ENCODE measurements at regions of chr14 and their contacts with region 1.

Region 1: DNA sequence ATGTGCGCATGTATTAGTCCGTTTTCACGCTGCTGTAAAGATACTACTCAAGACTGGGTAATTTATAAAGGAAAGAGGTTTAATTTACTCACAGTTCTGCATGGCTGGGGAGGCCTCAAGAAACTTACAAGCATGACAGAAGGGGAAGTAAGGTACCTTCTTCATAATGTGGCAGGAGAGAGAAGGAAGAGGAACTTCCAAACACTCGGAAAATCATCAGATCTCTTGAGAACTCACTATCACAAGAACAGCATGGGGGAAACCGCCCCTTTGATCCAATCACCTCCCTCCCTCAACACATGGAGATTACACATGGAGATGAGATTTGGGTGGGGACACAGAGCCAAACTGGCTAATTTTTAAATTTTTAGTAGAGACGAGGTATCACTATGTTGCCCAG is 41.8 kb upstream of the SNX6 start:
- DNase-seq: no peak
- ATAC-seq: no peak
- H3K4me3 ChIP-seq: no peak overlapping the region
- H3K27ac ChIP-seq: no peak overlapping the region
- H3K4me1 ChIP-seq: peaks cover 14% of the 10 kb centered on the region
- H3K27me3 ChIP-seq: peaks cover 0 to 4% of the 10 kb centered on the region in 2 experiments; a peak in 1 of 5 replicates
- CTCF ChIP-seq: no peak
- EP300 ChIP-seq: no peak
- POLR2A ChIP-seq: no peak
- RAD21 ChIP-seq: no peak

Region 2: DNA sequence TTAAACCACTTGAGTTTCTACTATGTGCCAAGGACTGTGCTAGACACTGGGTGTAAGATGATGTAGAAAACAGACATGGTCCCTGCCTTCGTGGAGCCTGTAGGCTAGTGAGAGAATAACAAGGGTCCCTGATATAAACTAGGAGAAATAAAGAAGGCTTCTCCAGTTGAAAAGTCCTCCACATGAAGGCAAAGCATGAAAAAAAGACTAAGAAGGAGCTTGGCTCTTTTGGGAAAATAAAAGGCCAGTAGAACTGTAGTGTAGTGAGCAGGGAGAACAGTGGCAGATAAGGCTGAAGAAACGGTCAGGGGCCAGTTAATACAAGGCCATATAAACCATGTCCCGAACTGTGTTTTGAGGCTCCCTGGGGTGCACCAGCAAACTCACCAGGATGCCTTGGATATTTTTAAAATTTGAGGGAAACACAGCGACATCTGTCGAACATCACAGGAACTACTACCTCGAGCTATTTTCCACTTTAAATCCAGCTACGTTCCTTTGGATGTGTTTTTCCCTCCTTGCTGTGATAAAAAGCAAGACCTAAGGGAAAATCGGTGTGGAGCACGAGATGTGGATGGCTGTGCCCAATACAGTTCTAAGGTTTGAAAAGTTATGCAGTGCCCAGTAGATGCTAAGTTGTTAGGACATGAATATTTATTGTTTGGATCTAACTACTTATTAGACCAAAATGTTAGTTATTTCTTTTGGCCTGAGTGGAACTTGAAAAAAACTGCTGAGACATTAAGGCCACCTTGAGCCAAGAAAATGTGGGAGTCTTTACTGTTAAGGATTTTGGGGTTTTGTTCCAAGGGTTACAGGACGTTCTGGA is 51.2 kb after region 1 on chr14:
- CTCF ChIA-PET with region 1: interaction called, 203 read pairs
- POLR2A ChIA-PET with region 1: interaction called, 4 read pairs
- in situ Hi-C with region 1: loop called (anchors 5 kb)
- intact Hi-C with region 1: loop called (anchors 1 kb)
- DNase-seq: peak; percentile 71
- ATAC-seq: peak; percentile 77
- H3K4me3 ChIP-seq: no peak overlapping the region
- H3K27ac ChIP-seq: no peak overlapping the region
- H3K4me1 ChIP-seq: peaks cover 10% of the 10 kb centered on the region
- H3K27me3 ChIP-seq: no peaks in the 10 kb centered on the region; a peak in 1 of 5 replicates
- CTCF ChIP-seq: peak; percentile 97
- EP300 ChIP-seq: no peak
- POLR2A ChIP-seq: no peak
- RAD21 ChIP-seq: peak; percentile 90

Region 3: GRCh38 chr14:34875031-34875922 is 203.6 kb after region 1 on chr14 and contains the start of gene BAZ1A:
- CTCF ChIA-PET with region 1: no interaction called
- POLR2A ChIA-PET with region 1: no interaction called
- in situ Hi-C with region 1: no loop called
- intact Hi-C with region 1: loop called (anchors 1 kb)
- DNase-seq: peak; percentile 93
- ATAC-seq: peak; percentile 46
- H3K4me3 ChIP-seq: peak within 1 kb of the TSS; percentile 82 to 89 (median 87)
- H3K27ac ChIP-seq: peak within 1 kb of the TSS; percentile 85
- H3K4me1 ChIP-seq: peaks cover 34% of the 10 kb centered on the region
- H3K27me3 ChIP-seq: no peaks in the 10 kb centered on the region; a peak in 1 of 5 replicates
- CTCF ChIP-seq: peak; percentile 37; the same call in 1 of the 2 replicates
- EP300 ChIP-seq: no peak
- POLR2A ChIP-seq: peak in 1 of 2 experiments; percentile 93; a peak in 2 of 4 replicates
- RAD21 ChIP-seq: no peak; the same call in none of the 2 replicates
- total RNA-seq, gene BAZ1A: 56.8 and 68.3 TPM in 2 replicates

Region 4: DNA sequence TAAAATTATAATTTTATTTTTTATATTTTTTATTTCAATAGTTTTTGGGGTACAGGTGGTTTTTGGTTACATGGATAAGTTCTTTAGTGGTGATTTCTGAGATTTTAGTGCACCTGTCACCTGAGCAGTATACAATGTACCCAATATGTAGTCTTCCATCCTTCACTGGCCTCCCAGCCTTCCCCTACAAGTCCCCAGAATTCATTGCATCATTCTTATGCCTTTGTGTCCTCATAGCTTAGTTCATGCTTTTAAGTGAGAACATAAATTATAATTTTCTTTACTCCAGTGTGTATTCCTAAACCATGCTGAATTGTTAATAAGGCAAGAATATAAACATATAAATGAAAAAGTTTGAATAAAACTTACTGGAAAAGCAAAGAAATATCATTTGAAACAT is 751.9 kb after region 1 on chr14:
- CTCF ChIA-PET with region 1: interaction called, 11 read pairs
- POLR2A ChIA-PET with region 1: no interaction called
- in situ Hi-C with region 1: loop called (anchors 5 kb)
- intact Hi-C with region 1: loop called (anchors 2 kb)
- DNase-seq: no peak
- ATAC-seq: no peak
- H3K4me3 ChIP-seq: no peak overlapping the region
- H3K27ac ChIP-seq: no peak overlapping the region
- H3K4me1 ChIP-seq: peaks cover 36% of the 10 kb centered on the region
- H3K27me3 ChIP-seq: no peaks in the 10 kb centered on the region; a peak in 1 of 5 replicates
- CTCF ChIP-seq: no peak
- EP300 ChIP-seq: no peak
- POLR2A ChIP-seq: no peak
- RAD21 ChIP-seq: no peak

Measured in HepG2 (cell line).